ENCODE measurements at regions of chr17 and their contacts with region 1.

Region 1: GRCh38 chr17:73429440-73430164 is 117.8 kb upstream of the CDC42EP4 start:
- DNase-seq: peak; percentile 96
- ATAC-seq: peak; percentile 93

Region 2: GRCh38 chr17:73506257-73507050 is 76.9 kb after region 1 on chr17:
- intact Hi-C with region 1: no loop called
- DNase-seq: no peak
- ATAC-seq: no peak

Region 3: GRCh38 chr17:73705594-73705993 is 276.0 kb after region 1 on chr17:
- intact Hi-C with region 1: loop called (anchors 5 kb)
- DNase-seq: no peak
- ATAC-seq: no peak